ENCODE measurements at regions of chr5 and their contacts with region 1.

Region 1: DNA sequence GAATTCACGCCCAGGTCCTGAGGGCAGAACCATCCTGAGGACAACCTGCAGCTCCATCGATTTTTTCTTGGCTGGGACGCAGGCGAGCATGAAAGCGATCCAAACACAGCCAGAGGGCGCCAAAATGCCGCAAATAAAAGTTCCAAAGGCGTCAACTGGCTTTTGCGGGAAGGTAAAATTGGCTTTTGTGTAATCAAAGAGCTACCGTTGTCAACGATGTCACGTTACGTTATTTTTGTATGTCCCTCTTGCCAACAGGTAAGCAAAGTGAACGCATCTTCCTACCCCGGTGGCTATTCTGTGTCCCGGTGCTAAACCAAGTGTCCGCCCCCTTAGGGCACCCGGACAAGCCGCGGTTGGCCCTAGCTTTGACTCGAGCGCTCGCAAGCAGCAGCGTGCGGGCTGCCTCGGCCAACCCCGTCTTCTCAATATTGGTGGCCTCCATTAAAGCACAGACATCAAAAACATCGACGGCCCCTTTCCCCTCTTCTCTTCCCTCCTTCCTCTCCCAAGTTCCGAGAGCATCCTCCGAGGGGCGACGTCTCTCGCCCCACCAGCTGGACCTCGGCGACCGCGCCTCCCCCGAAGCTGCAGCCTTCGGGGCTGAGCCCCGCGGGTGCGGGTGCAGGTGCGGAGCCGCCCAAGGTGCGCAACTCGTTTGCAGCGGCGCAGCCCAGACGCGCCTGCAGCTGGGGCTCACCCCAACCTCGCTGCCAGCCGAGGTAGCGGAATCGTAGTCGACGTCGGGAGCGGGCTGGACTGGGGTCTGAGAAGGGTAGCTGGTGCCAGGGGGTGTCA is 1.1 kb upstream of the BASP1 start:
- DNase-seq: peak; percentile 99
- ATAC-seq: peak; percentile 51
- H3K4me3 ChIP-seq: peak overlapping the region; percentile 67
- H3K27ac ChIP-seq: no peak overlapping the region
- H3K4me1 ChIP-seq: peaks cover 29% of the 10 kb centered on the region
- H3K27me3 ChIP-seq: no peaks in the 10 kb centered on the region
- CTCF ChIP-seq: peak; percentile 99

Region 2: GRCh38 chr5:17255471-17256021 is 39.2 kb after region 1 on chr5:
- CTCF ChIA-PET with region 1: no interaction called
- POLR2A ChIA-PET with region 1: interaction called, 4 read pairs
- intact Hi-C with region 1: loop called (anchors 5 kb)
- DNase-seq: peak; percentile 80
- ATAC-seq: no peak
- H3K4me3 ChIP-seq: no peak overlapping the region
- H3K27ac ChIP-seq: peak overlapping the region; percentile 88
- H3K4me1 ChIP-seq: peaks cover 92% of the 10 kb centered on the region
- H3K27me3 ChIP-seq: no peaks in the 10 kb centered on the region
- CTCF ChIP-seq: no peak

Region 3: DNA sequence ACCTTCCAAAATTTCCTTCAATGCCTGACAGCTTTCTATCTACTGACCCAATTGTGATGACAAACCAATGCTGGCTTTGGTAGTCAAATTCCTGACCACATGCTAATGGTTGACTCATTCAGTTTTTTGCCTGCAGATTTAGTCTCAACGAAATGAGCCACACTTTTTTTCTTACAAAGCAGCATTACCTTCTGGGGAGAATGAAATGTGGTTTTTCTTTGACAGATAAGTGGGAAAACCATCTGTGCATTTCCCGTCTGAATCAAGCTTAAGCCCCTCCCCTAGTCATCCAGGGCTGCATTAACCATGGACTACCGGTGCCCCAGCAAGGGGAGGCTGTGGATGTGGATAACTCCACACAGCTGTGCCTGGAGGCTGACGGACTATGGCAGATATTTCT is 182.1 kb after region 1 on chr5:
- CTCF ChIA-PET with region 1: no interaction called
- POLR2A ChIA-PET with region 1: no interaction called
- intact Hi-C with region 1: loop called (anchors 5 kb)
- DNase-seq: peak; percentile 93
- ATAC-seq: peak; percentile 74
- H3K4me3 ChIP-seq: no peak overlapping the region
- H3K27ac ChIP-seq: no peak overlapping the region
- H3K4me1 ChIP-seq: peaks cover 26% of the 10 kb centered on the region
- H3K27me3 ChIP-seq: no peaks in the 10 kb centered on the region
- CTCF ChIP-seq: no peak

Region 4: DNA sequence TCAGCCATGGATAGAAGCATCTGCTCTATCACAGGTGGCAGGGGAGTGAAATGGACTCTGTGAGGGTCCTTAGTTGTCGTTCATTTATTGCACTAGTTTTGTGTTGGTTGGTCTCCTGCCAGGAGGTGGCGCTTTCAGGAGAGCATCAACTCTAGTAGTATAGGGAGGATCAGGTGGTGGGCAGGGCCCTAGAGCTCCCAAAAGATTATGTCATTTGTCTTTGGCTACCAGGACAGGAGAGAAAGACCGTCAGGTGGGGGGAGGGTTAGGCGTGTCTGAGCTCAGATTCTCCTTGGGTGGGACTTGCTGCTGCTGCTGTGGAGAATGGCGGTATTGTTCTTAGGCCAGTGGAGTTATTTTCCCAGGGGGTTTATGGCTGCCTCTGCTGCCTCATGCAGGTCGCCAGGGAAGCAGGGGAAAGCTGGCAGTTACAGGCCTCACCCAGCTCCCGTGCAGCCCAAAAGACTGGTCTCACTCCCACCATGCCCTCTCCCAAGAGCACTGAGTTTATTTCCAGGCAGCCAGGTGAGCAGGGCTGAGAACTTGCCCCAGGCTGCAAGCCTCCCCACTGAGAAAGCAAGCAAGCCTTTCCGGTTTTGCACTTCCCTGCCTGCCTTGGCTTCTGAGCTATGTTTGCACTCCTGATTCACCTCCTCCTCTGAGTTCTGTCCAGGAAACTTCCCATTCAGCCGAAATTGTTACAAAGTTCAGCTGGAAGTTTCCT is 735.2 kb after region 1 on chr5:
- CTCF ChIA-PET with region 1: interaction called, 8 read pairs
- POLR2A ChIA-PET with region 1: no interaction called
- intact Hi-C with region 1: loop called (anchors 5 kb)
- DNase-seq: peak; percentile 98
- ATAC-seq: peak; percentile 94
- H3K4me3 ChIP-seq: peak overlapping the region; percentile 61
- H3K27ac ChIP-seq: peak overlapping the region; percentile 99
- H3K4me1 ChIP-seq: peaks cover 22% of the 10 kb centered on the region
- H3K27me3 ChIP-seq: no peaks in the 10 kb centered on the region
- CTCF ChIP-seq: peak; percentile 91

Region 5: GRCh38 chr5:18305297-18305924 is 1089.0 kb after region 1 on chr5:
- CTCF ChIA-PET with region 1: no interaction called
- POLR2A ChIA-PET with region 1: no interaction called
- intact Hi-C with region 1: loop called (anchors 1 kb)
- DNase-seq: peak; percentile 75
- ATAC-seq: peak; percentile 64
- H3K4me3 ChIP-seq: no peak overlapping the region
- H3K27ac ChIP-seq: no peak overlapping the region
- H3K4me1 ChIP-seq: no peaks in the 10 kb centered on the region
- H3K27me3 ChIP-seq: no peaks in the 10 kb centered on the region
- CTCF ChIP-seq: peak; percentile 96

Measured in PC-3 (cell line).